T-cell (primary cell): ENCODE measurements at regions of chrX and their contacts with region 1.

Region 1: DNA sequence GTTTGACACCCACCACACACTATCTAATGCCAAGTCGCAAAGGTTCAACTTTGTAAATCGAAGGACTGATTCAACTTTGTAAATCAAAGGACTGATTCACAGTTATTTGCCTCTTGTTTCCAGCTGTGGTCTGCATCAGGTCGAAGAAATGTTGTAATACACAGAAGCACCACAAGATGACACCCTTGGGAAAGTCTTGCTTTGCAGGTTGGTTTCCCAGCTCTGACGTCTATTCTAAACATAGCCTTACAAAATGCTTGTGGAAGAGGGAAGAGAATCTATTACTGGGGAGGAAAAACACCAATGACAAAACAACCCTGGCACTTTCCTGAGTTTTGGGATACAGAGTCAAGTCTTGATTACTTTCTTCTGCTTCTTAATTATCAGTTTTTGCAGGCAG is 35.3 kb downstream of the SUPT20HL1 start:
- DNase-seq: peak in 28 of 35 experiments; percentile 2 to 79 (median 25)
- ATAC-seq: peak; percentile 50 to 70 (median 64)
- H3K4me3 ChIP-seq: no peak overlapping the region
- H3K4me3 Mint-ChIP-seq: no peak overlapping the region
- H3K27ac ChIP-seq: no peak overlapping the region
- H3K27ac Mint-ChIP-seq: no peak overlapping the region
- H3K4me1 ChIP-seq: no peaks in the 10 kb centered on the region
- H3K4me1 Mint-ChIP-seq: peaks cover 0 to 5% (median 4%) of the 10 kb centered on the region in 3 donors
- H3K27me3 ChIP-seq: peaks cover 0 to 2% of the 10 kb centered on the region in 2 experiments
- H3K27me3 Mint-ChIP-seq: peaks cover 6 to 38% of the 10 kb centered on the region in 2 donors

Region 2: DNA sequence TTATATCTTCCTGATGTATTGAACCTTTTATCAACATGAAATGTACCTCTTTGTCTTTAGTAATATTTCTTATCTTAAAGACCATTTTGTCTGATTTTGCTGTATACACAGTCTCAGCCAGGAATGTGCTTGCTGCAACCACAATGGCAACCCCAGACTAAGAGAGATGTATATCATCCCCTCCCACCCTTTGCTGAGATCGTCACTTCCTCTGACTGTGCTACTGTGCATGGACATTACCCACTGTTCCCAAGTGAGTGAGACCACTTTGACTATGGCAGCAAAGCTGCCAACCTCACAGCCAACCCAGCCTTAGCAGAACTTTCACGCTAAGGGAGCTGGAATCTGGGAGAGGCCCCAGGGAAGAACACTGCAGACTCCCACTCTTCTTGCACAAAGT is 295.1 kb before region 1 on chrX:
- CTCF ChIA-PET with region 1: no interaction called
- POLR2A ChIA-PET with region 1: no interaction called
- DNase-seq: no peak
- ATAC-seq: no peak
- H3K4me3 ChIP-seq: no peak overlapping the region
- H3K4me3 Mint-ChIP-seq: no peak overlapping the region
- H3K27ac ChIP-seq: no peak overlapping the region
- H3K27ac Mint-ChIP-seq: no peak overlapping the region
- H3K4me1 ChIP-seq: no peaks in the 10 kb centered on the region
- H3K4me1 Mint-ChIP-seq: peaks cover 0 to 16% (median 8%) of the 10 kb centered on the region in 3 donors
- H3K27me3 ChIP-seq: no peaks in the 10 kb centered on the region
- H3K27me3 Mint-ChIP-seq: no peaks in the 10 kb centered on the region

Region 3: GRCh38 chrX:24371391-24371972 is 24.3 kb before region 1 on chrX:
- CTCF ChIA-PET with region 1: interaction called, 3 to 10 read pairs
- POLR2A ChIA-PET with region 1: no interaction called
- DNase-seq: peak; percentile 6 to 76 (median 40)
- ATAC-seq: peak; percentile 63 to 81 (median 72)
- H3K4me3 ChIP-seq: no peak overlapping the region
- H3K4me3 Mint-ChIP-seq: peak overlapping the region; percentile 32 to 45 (median 38)
- H3K27ac ChIP-seq: no peak overlapping the region
- H3K27ac Mint-ChIP-seq: no peak overlapping the region
- H3K4me1 ChIP-seq: peaks cover 0 to 9% of the 10 kb centered on the region in 2 experiments
- H3K4me1 Mint-ChIP-seq: peaks cover 8 to 11% (median 10%) of the 10 kb centered on the region in 3 donors
- H3K27me3 ChIP-seq: peaks cover 0 to 14% of the 10 kb centered on the region in 2 experiments
- H3K27me3 Mint-ChIP-seq: peaks cover 3 to 24% of the 10 kb centered on the region in 2 donors